Transverse colon (tissue), 4 donors: ENCODE measurements at regions of chr13 and their contacts with region 1.

Region 1: DNA sequence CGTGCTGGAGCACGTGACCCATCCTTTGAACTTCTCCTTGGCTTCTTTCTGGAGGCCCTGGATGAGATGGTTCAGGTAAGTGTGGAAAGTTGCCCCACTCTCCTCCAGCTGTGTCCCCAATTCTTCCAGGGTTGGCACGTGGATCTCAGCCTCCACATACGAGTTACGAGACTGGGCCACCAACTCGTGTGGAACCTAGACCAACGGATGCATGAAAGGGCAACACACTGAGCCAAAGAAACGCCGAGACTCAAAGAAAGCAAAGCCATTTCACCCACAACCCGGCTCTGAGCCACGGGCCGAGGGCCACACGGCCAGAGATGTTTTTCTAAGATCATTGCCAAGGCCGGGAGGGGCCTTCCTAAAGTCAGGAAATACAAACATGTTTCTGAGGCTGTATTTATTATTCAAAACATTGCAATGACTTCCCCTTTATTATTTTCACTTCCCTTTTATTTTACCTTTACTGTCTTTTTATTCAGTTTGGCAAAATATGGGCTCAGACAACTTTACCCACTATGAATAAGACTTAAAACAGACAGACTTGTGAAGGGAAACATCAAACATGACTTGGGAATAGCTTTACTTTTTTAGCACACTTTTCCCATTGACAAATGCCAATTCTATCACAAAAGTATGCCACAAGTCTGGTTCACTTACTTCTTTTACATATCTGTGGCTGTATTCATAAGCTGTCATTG is 94.6 kb downstream of the KL start:
- DNase-seq: no peak
- H3K4me3 ChIP-seq: no peak overlapping the region
- H3K27ac ChIP-seq: peak overlapping the region; percentile 52 to 75 (median 72)
- H3K4me1 ChIP-seq: peaks cover 20 to 56% (median 42%) of the 10 kb centered on the region in 4 donors
- H3K27me3 ChIP-seq: no peaks in the 10 kb centered on the region
- CTCF ChIP-seq: no peak
- EP300 ChIP-seq: no peak
- POLR2A ChIP-seq: no peak

Region 2: DNA sequence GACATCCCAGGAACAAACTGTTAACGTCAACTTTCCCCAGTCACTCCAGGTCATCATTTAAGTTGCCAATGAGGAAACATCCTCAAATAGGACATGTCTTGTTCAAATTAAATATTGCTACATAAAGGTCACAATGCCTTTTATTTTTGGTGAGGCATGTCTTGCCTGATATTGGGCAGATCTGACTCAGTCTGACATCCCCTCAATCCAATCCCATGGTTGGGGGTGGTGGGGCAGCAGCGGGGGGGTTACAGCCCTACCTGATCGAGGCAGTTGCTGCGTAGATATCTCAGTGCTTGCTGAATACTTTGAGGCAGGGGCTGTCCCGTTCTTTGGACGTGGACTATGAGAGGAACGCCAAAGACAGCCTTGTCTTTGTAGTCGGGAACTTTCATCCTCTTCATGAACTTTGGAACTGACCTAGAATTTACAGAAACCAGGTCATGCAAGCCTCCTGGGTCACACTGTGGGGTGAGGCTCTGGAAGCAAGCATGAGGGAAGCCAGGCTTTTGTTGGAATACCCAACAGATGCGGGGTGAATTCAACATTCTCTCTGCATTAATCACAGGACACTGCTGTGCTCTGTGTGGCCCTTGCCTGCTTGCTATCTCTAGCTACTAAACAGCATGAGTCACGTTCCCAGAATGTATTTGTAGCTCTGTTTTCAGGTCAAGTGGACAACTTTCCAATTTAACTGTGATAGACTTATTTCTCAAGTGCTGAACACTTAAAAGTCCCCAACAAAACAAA is 15.1 kb after region 1 on chr13:
- in situ Hi-C with region 1: no loop called
- intact Hi-C with region 1: no loop called
- DNase-seq: no peak
- H3K4me3 ChIP-seq: no peak overlapping the region
- H3K27ac ChIP-seq: peak overlapping the region; percentile 63 to 83 (median 74)
- H3K4me1 ChIP-seq: peaks cover 6 to 40% (median 12%) of the 10 kb centered on the region in 4 donors
- H3K27me3 ChIP-seq: no peaks in the 10 kb centered on the region
- CTCF ChIP-seq: no peak
- EP300 ChIP-seq: peak; percentile 46
- POLR2A ChIP-seq: no peak

Region 3: DNA sequence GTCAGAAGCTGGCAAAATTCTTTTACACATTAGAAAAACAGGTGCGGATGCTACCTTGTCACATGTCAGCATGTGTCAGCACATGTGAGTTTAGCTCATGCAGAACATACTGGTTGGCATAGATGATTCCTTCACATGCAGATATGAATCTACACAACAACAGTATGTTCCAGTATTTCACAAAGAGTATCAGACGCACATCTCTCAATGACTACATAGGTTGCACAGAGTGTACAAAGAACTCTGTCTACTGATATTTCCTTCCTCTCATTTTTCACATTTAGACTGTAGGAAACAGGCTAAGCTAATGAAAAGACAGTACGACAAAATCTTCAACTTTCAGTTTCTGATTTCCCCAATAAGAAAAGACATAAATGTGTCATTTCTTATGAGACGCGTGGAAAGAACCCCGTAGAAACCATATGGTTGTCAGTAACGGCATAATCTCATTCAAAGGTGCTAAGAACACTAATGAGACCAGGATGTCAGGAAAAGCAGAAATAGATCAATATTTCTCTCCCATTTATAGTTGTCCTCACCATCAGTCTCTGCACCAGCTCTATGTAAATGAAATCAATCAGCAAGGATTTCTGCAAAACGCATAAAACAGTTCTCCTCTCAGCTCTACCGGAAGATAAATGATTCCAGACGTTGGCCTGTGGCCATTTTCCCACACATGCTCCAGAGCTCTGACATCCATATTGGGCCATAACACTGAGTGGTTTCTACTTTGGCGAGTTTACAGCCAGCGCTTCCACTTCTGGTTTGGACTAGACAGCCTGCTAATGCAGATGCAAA is 93.5 kb after region 1 on chr13:
- in situ Hi-C with region 1: no loop called
- intact Hi-C with region 1: loop called (anchors 10 kb)
- DNase-seq: peak; percentile 59
- H3K4me3 ChIP-seq: peak overlapping the region; percentile 9 to 33 (median 18)
- H3K27ac ChIP-seq: peak overlapping the region; percentile 71 to 84 (median 79)
- H3K4me1 ChIP-seq: peaks cover 11 to 53% (median 24%) of the 10 kb centered on the region in 4 donors
- H3K27me3 ChIP-seq: no peaks in the 10 kb centered on the region
- CTCF ChIP-seq: no peak
- EP300 ChIP-seq: peak; percentile 43
- POLR2A ChIP-seq: no peak

Region 4: GRCh38 chr13:33262062-33262497 is 151.2 kb after region 1 on chr13:
- in situ Hi-C with region 1: no loop called
- intact Hi-C with region 1: no loop called
- DNase-seq: peak; percentile 39
- H3K4me3 ChIP-seq: no peak overlapping the region
- H3K27ac ChIP-seq: peak overlapping the region; percentile 57 to 80 (median 67)
- H3K4me1 ChIP-seq: peaks cover 28 to 78% (median 38%) of the 10 kb centered on the region in 4 donors
- H3K27me3 ChIP-seq: no peaks in the 10 kb centered on the region
- CTCF ChIP-seq: no peak
- EP300 ChIP-seq: no peak
- POLR2A ChIP-seq: no peak